Left cardiac atrium (tissue), 4 donors: ENCODE measurements at regions of chr17 and their contacts with region 1.

Region 1: GRCh38 chr17:49707608-49708514 is at the start of gene SLC35B1:
- DNase-seq: peak; percentile 99
- ATAC-seq: peak; percentile 99 to 100
- total RNA-seq, gene SLC35B1: 48.8 to 78.8 TPM

Region 2: DNA sequence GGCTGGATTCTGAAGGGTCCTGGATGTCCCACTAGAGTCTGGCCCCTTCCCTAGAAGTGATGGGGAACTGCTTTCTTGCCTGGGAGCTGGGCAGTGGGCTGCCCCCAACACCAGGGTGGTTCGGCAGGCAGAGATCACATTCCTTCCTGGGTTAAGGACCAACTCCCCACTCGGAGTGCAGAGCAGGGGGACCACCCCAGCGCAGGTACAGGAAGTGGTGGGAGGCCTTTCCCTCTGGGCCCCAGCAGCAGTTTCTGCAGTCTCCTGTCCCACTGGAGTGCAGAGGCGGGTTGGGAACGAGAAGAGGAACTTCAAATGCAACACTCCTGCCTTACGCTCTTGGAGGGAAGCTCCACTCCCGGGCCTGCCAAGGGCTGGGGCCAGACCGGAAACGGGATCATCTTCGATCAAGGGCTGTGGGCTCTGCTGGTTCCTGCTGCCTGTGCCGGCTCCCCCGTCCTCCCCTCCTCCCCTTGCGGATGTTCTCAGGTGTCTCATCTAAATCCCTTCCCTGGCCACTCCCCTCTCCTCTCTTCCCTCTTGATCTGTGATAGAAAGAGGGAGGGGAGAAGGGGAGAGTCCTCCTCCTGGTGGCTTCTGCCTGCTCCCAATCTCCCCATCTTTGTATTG is 221.7 kb before region 1 on chr17:
- intact Hi-C with region 1: no loop called
- DNase-seq: no peak
- ATAC-seq: peak in 1 of 2 donors; percentile 28

Region 3: DNA sequence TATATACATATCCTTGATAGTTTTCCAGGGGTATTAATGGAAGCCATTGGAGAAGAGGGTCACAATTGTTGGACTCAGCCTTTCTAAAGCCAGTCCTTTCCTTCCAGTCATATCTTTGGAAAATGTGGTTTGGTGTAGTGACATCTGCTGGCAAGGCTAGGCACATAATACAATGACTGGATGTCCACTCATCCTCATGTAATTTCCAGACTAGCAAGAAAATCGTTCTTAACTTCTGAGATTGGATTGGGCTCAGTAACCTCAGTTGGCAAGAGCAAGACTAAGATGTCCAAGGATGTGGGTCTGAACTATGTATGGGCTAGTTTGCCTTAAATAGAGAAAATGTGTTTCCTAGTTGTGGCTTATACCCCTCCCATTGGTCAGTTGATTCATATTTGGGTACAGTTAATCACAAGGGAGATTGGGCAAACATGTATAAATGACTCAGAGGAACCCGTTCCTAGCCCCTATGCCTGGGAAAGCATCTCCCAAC is 71.9 kb after region 1 on chr17:
- intact Hi-C with region 1: loop called (anchors 5 kb)
- DNase-seq: no peak
- ATAC-seq: peak; percentile 55 to 66

Region 4: GRCh38 chr17:49788478-49789242 is 80.8 kb after region 1 on chr17 and contains the start of gene KAT7:
- intact Hi-C with region 1: loop called in 1 of 2 experiments (anchors 2 kb)
- DNase-seq: peak; percentile 99
- ATAC-seq: peak; percentile 96 to 97
- total RNA-seq, gene KAT7: 47.5 to 49.0 TPM

Region 5: DNA sequence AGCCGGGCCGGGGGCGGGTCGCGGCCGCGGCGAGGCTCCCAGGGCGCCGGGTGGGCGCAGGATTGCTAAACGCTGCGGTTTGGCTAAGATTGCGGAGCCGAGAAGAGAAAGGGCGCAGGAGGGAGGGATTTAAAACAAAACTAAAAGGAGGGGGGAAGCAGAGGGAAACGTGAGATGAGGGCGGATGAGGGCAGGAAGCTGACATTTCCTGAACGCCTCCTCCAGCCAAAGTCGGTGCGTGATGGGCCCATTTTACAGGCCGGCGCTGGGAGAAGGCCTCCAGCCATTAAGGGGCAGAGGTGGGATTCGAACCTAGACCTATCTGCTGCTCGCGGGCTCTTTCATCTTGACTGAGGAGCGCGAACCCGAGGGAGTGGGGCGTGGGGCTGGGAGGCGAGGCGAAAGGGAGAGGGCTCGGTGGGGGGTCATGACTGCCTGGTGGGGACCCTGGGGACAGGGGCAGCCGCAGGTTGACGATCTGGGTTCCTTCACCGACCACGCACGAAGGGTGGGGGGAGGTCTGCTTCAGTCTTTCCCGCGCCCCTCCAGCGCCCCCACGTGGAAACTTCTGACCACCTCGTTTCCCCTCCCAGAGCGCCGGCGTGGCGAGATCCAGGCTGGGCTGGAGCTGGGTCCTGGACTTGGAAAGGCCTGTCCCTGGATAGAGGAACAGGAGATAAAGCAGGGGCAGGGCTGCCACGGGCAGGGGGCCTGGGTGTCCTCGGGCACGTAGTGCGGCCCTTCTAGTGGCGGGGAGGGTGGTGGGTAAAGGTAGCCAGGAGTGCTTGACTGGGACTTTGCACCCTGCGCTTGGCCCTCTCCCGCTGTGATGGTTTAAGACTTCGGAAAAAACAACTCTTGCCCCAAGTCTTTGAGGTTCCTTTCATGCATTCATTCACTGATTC is 143.8 kb after region 1 on chr17:
- intact Hi-C with region 1: loop called (anchors 5 kb)
- DNase-seq: peak; percentile 88
- ATAC-seq: peak; percentile 82 to 83